ENCODE measurements at regions of chr11 and their contacts with region 1.

Region 1: DNA sequence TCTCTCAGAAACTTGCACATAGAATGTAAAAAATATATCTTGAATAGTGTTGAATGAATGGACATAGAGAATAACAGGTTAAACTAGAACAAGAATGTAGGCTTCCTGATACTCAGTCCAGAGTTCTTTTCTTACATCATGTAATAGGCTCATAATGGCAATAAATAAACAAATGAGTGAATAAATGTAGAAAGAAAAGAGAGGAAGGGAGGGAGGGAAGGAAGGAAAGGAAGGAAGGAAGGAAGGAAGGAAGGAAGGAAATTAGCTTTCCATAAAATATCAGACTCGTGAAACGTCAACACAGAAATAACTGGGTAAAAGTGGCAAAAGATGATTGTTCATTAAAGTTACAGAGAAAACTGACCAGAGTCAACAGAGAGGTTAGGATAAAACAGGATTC is 2001.0 kb downstream of the LRRC4C start:
- DNase-seq: no peak
- ATAC-seq: no peak
- H3K4me3 ChIP-seq: no peak overlapping the region
- H3K27ac ChIP-seq: no peak overlapping the region
- H3K4me1 ChIP-seq: no peaks in the 10 kb centered on the region
- H3K27me3 ChIP-seq: no peaks in the 10 kb centered on the region
- CTCF ChIP-seq: no peak
- POLR2A ChIP-seq: no peak

Region 2: DNA sequence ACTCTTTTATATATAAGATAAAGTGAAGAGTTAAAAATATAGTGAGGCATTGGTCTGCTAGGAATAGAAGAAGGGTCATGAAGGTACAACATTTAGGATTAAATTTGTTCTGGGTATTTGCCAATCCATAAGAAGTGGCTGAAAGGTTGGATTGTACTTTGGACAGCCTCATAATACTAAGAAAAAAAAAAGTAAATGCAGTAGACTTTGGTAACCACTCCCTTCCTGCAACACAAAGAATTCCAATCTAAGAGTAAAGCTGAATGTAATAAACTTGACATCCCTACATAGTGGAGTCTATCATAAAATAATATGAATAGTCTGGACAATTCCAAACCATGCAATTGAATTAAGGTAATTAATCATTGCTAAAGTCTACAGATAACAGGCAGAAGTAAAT is 293.5 kb before region 1 on chr11:
- in situ Hi-C with region 1: no loop called
- intact Hi-C with region 1: loop called (anchors 10 kb)
- DNase-seq: no peak
- ATAC-seq: no peak
- H3K4me3 ChIP-seq: no peak overlapping the region
- H3K27ac ChIP-seq: no peak overlapping the region
- H3K4me1 ChIP-seq: no peaks in the 10 kb centered on the region
- H3K27me3 ChIP-seq: no peaks in the 10 kb centered on the region
- CTCF ChIP-seq: no peak
- POLR2A ChIP-seq: no peak